ENCODE measurements at regions of chr2 and their contacts with region 1.

Region 1: DNA sequence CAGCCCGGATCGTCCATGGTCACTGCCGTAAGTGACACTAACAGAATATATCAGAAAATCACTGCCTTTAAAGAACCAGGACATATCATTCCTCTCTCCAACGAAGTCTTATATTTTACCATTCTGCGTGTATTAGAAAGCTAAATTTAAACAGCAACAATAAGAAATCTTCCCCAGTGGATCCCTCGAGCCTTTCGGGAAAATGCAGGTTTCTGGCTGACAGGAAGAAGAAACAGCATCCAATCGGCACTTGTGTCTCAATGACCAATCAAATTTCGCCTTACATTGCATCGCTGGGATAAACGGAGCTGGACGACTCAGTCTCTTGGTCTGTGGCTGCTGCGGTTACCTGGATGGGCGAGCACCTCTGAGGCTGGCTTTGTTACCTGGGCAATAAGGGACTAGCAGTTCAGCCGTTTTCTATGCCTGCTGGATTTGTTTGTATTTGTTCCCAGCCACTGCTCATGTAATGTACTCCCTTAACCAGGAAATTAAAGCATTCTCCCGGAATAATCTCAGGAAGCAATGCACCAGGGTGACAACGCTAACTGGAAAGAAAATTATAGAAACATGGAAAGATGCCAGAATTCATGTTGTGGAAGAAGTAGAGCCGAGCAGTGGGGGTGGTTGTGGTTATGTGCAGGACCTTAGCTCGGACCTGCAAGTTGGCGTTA is at the start of gene DUSP19:
- DNase-seq: peak; percentile 97
- H3K4me3 ChIP-seq: peak within 1 kb of the TSS; percentile 65 to 97 (median 89)
- H3K27ac ChIP-seq: peak within 1 kb of the TSS; percentile 79
- H3K4me1 ChIP-seq: peaks cover 12% of the 10 kb centered on the region
- H3K27me3 ChIP-seq: peaks cover 17 to 23% of the 10 kb centered on the region in 2 experiments
- CTCF ChIP-seq: no peak
- POLR2A ChIP-seq: peak; percentile 83
- total RNA-seq, gene DUSP19: 1.7 and 1.9 TPM in 2 replicates

Region 2: GRCh38 chr2:182883451-182883850 is 195.2 kb before region 1 on chr2:
- CTCF ChIA-PET with region 1: no interaction called
- POLR2A ChIA-PET with region 1: no interaction called
- dilution Hi-C with region 1: no loop called
- intact Hi-C with region 1: no loop called
- DNase-seq: no peak
- H3K4me3 ChIP-seq: no peak overlapping the region
- H3K27ac ChIP-seq: no peak overlapping the region
- H3K4me1 ChIP-seq: no peaks in the 10 kb centered on the region
- H3K27me3 ChIP-seq: no peaks in the 10 kb centered on the region
- CTCF ChIP-seq: no peak
- POLR2A ChIP-seq: no peak

Region 3: DNA sequence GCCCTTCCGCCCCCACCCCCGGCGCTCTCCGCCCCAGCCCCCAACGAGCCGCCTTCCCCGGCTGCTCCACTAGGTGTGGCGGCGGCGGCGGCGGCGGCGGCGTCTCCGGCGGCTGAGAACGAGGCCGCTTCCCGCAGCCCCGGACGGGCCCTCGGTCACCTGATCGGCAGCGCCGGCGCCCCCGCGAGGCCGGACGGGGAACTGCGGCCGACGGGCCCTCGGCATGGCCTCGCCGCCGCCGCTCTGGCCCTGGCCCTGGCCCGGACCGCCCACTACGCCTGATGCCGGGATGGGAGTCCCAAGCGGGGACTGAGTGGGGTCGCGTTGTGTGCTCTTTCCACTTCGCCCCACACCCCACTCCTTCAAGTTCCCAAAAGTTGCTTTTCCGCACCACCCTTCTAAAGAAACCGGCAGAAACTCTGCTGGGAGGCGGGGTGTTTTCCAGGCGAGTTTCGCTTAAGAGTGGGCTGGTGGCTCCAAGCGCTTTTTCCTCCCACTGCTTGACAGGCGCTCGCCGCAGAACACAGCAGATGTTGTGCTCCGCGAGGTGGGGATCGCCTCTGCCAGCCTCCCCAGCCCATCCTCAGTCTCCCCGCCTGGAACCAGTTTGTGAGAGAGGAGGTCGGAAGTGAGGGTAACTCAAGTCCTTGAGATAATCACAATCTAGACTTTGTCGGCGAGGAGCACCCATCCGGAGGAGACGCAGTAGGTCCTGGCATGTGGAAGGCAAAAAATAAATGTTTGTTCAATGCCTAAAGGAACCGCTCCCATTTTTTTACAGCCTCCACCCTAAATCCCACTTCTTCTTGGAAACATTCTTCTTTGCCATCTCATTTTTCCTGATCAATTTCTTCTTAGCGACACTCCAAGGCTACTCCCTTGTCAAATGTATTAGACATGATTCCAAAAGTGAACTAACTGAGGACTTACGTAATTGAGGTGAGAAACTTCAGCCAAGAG is 40.0 kb before region 1 on chr2 and contains the start of gene NCKAP1:
- CTCF ChIA-PET with region 1: interaction called, 3 read pairs
- POLR2A ChIA-PET with region 1: no interaction called
- dilution Hi-C with region 1: no loop called
- intact Hi-C with region 1: loop called (anchors 1 kb)
- DNase-seq: peak; percentile 88
- H3K4me3 ChIP-seq: peak within 1 kb of the TSS; percentile 86 to 99 (median 98)
- H3K27ac ChIP-seq: peak within 1 kb of the TSS; percentile 91
- H3K4me1 ChIP-seq: peaks cover 28% of the 10 kb centered on the region
- H3K27me3 ChIP-seq: peaks cover 5 to 7% of the 10 kb centered on the region in 2 experiments
- CTCF ChIP-seq: peak; percentile 68 to 83
- POLR2A ChIP-seq: no peak
- total RNA-seq, gene NCKAP1: 121 and 130 TPM in 2 replicates

Region 4: GRCh38 chr2:183242937-183243336 is 164.3 kb after region 1 on chr2:
- CTCF ChIA-PET with region 1: no interaction called
- POLR2A ChIA-PET with region 1: no interaction called
- dilution Hi-C with region 1: no loop called
- intact Hi-C with region 1: loop called (anchors 5 kb)
- DNase-seq: peak; percentile 11
- H3K4me3 ChIP-seq: no peak overlapping the region
- H3K27ac ChIP-seq: no peak overlapping the region
- H3K4me1 ChIP-seq: no peaks in the 10 kb centered on the region
- H3K27me3 ChIP-seq: no peaks in the 10 kb centered on the region
- CTCF ChIP-seq: no peak
- POLR2A ChIP-seq: no peak